Aorta (tissue), 5 donors: ENCODE measurements at regions of chr13 and their contacts with region 1.

Region 1: GRCh38 chr13:112740502-112741131 is 50.8 kb downstream of the ATP11A start:
- DNase-seq: peak in 1 of 2 donors; percentile 62
- ATAC-seq: peak; percentile 64
- H3K4me3 ChIP-seq: no peak overlapping the region
- H3K27ac ChIP-seq: no peak overlapping the region
- H3K4me1 ChIP-seq: no peaks in the 10 kb centered on the region
- H3K27me3 ChIP-seq: no peaks in the 10 kb centered on the region

Region 2: GRCh38 chr13:112806739-112807652 is 66.4 kb after region 1 on chr13:
- intact Hi-C with region 1: loop called in 1 of 2 experiments (anchors 5 kb)
- DNase-seq: no peak
- ATAC-seq: no peak
- H3K4me3 ChIP-seq: no peak overlapping the region
- H3K27ac ChIP-seq: no peak overlapping the region
- H3K4me1 ChIP-seq: no peaks in the 10 kb centered on the region
- H3K27me3 ChIP-seq: no peaks in the 10 kb centered on the region